ENCODE measurements at regions of chr1 and their contacts with region 1.

Region 1: GRCh38 chr1:174982971-174983689 is 16.6 kb upstream of the CACYBP start:
- DNase-seq: peak; percentile 55
- H3K4me3 Mint-ChIP-seq: no peak overlapping the region
- H3K27ac Mint-ChIP-seq: no peak overlapping the region
- H3K4me1 Mint-ChIP-seq: peaks cover 30% of the 10 kb centered on the region
- H3K27me3 Mint-ChIP-seq: no peaks in the 10 kb centered on the region

Region 2: DNA sequence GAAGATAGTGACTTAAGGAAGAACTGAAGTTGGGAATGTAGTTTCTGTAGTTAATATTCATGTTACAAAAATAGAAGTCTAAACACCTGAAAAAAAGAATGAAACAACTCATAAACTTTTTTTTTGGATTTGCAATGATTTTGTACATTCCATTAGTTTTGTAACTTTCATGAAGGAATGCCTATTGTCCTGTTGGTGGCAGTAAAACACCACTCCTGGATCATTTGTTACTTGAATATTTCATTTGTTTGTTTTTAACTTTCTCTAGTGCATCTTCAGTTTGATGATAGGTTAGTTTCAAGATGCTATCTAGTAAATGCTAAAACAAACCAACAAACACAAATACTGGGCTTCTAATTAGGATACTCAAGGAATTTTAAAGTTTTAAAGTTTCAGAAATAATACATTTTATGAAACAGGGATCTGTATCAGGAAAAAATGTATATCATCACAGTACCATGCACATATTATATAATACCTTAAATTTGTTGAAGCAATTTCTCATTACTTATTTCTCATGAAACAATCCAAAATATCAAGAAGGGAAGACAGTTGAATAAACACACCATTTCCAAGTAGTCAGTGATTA is 213.1 kb before region 1 on chr1:
- CTCF ChIA-PET with region 1: interaction called, 25 read pairs
- DNase-seq: peak; percentile 21
- H3K4me3 Mint-ChIP-seq: no peak overlapping the region
- H3K27ac Mint-ChIP-seq: no peak overlapping the region
- H3K4me1 Mint-ChIP-seq: peaks cover 7% of the 10 kb centered on the region
- H3K27me3 Mint-ChIP-seq: no peaks in the 10 kb centered on the region

Region 3: DNA sequence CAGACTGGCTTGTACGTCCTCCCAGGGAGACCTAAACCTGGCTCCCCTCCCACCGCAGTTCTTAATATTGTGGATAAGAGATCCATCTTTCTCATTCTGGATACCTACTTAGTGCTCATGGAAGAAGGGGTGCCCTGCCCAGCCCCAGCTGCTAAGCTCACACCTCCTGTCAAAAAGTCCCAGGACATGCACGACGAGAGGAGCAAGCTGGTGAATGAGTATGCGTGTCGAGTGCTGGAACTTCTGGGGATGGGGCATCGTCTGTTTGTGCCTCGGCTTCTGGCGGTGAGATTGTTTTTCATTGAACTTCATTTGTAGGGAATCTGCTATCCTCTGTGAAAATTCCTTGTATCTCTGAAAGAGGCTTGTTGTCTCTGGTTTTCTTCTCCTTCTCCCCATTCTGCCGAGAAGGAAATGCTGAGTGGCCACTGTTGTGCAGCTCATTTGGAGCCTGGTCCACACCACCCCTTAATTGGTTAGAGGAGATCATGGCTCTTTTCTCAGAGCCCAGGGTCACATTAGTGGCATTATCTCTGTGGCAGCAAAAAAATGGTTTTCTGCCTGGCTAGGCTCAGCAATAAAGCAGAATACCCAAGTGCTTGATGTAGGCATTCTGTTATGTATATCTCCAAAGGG is 182.8 kb before region 1 on chr1:
- CTCF ChIA-PET with region 1: interaction called, 12 read pairs
- DNase-seq: peak; percentile 39
- H3K4me3 Mint-ChIP-seq: no peak overlapping the region
- H3K27ac Mint-ChIP-seq: no peak overlapping the region
- H3K4me1 Mint-ChIP-seq: peaks cover 18% of the 10 kb centered on the region
- H3K27me3 Mint-ChIP-seq: no peaks in the 10 kb centered on the region

Region 4: DNA sequence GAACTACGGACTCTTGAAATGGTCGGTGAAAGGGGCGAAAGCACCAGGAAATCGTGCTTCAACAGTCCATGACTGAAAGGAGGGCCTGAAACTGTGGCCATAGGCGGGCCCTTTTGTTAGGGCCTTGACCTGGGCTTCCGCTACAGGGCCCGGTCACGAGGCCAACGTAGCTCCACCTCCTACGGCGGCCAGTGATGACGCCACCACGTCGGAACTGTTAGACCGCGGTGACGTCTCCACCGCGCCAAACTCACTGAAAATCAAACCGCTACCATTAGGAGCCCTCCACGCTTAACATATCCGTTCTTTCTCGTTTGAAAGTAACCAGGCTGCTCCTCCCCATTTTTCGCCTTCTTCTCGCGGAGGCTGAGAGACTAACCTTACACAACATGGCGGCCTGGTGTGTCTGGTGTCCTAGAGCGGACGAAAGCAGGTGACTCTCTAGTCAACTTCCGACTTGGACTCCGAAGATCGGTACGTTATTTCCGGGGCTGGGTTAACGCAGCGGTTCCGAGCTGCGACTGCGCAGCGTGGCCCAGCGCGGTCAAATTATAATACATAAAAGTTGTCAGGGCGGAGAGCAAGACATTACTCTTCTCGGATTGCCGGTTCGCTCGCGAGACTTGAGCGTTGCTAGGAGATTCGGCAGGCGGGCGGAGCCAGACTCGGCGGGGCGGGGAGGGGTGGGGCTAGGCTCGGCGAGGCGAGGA is 16.2 kb after region 1 on chr1:
- CTCF ChIA-PET with region 1: interaction called, 17 read pairs
- DNase-seq: peak; percentile 97
- H3K4me3 Mint-ChIP-seq: no peak overlapping the region
- H3K27ac Mint-ChIP-seq: no peak overlapping the region
- H3K4me1 Mint-ChIP-seq: peaks cover 48% of the 10 kb centered on the region
- H3K27me3 Mint-ChIP-seq: no peaks in the 10 kb centered on the region